ENCODE measurements at regions of chr9 and their contacts with region 1.

Region 1: GRCh38 chr9:116484492-116485061 is 202.5 kb upstream of the TRIM32 start:
- DNase-seq: no peak

Region 2: DNA sequence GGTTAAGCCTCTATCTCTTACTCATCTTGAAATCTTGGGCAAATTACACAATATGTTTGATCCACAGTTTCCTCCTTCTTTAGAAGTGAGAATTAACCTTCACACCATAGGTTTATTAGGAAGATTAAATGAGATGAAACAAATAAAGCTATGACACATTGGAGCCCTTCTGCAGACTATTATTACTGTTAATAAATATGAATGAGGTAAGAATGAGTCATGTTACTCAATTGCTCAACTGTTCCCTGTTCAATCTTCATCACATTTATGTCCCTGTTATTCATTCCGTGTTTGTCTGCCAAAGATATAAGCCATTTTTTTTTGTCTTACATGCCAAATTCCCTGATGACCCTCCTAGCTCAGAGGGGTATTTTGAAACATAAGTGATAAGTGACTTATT is 383.1 kb before region 1 on chr9:
- intact Hi-C with region 1: loop called in 1 of 2 experiments (anchors 5 kb)
- DNase-seq: no peak

Region 3: GRCh38 chr9:116208417-116209232 is 276.0 kb before region 1 on chr9:
- intact Hi-C with region 1: no loop called
- DNase-seq: no peak

Region 4: DNA sequence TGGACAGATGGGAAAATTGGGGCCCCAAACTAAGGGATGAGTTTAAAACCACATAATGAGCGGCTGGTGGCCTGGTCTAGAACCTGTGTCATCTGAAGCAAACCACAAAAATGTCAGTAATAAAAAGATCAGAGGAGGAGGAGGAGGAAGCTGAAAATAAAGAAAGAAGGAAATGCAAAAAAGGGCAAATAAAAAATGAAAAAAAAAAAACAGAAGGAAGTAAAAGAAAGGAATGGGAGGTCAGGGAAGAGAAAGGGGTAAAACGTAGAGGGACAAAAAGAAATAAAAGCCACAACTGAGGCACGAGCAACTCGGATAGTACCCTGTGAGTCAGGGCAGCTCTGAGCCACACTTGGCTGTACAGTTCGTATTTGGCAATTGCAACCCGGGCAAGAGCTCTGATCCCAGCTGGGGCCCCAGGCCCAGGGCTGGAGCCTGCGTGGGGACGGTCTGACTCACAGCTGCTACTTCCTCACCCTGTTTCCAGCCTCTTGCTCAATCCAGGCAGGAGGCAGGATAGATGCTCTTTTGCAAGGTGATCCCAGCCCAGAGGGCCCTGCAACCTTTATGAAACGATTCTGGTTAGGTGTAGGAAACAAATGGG is 64.6 kb after region 1 on chr9:
- intact Hi-C with region 1: no loop called
- DNase-seq: peak; percentile 95

Measured in posterior vena cava (tissue), 2 donors.